Caco-2 (cell line): ENCODE measurements at regions of chr4 and their contacts with region 1.

Region 1: DNA sequence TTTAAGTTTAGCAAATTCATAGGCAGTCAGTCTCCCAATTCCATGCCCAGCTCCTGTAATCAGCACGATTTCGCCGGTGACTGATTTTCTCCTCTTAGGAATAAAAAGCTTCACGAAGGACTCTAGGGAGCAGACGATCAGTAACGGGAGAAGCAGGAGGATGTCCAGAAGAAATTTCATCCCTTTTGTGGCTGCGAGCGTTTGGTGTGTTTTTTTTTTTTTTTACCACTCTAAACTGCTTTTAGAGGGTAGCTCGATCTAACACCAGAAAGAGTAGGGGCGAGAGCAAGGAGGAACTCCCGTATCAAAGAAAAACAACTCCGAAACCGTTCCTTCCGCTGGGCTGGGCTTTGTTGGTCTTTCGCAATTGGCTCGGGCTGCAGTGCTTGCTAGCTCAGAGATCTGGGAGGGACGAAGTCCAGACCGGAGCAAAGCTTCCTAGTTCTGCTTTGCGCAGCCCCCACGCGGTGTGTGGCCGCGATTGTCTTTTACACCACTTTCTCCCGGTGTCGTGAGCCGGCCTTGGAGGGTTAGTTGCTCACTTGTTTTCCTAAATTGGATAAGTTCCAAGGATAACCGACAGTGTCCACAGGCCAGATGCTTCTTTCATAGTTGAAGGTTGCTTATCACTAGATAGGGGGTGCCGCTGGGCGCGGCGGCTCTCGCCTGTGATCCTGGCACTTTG is at the start of gene HSD17B11:
- DNase-seq: peak; percentile 85 to 90
- H3K4me3 ChIP-seq: peak within 1 kb of the TSS; percentile 53
- H3K4me3 Mint-ChIP-seq: peak within 1 kb of the TSS; percentile 87
- H3K27ac Mint-ChIP-seq: peak within 1 kb of the TSS; percentile 92
- H3K4me1 ChIP-seq: peaks cover 11% of the 10 kb centered on the region; the same call in 1 of the 2 replicates
- H3K4me1 Mint-ChIP-seq: peaks cover 18% of the 10 kb centered on the region
- H3K27me3 ChIP-seq: no peaks in the 10 kb centered on the region
- H3K27me3 Mint-ChIP-seq: no peaks in the 10 kb centered on the region
- CTCF ChIP-seq: no peak
- total RNA-seq, gene HSD17B11: 39.3 and 42.8 TPM in 2 replicates

Region 2: GRCh38 chr4:87422104-87423052 is 31.3 kb after region 1 on chr4 and contains the start of gene NUDT9:
- CTCF ChIA-PET with region 1: interaction called, 3 read pairs
- POLR2A ChIA-PET with region 1: interaction called, 12 read pairs
- intact Hi-C with region 1: loop called (anchors 1 kb)
- DNase-seq: peak; percentile 93 to 95
- H3K4me3 ChIP-seq: peak within 1 kb of the TSS; percentile 79
- H3K4me3 Mint-ChIP-seq: peak within 1 kb of the TSS; percentile 94
- H3K27ac Mint-ChIP-seq: peak within 1 kb of the TSS; percentile 96
- H3K4me1 ChIP-seq: peaks cover 17% of the 10 kb centered on the region
- H3K4me1 Mint-ChIP-seq: peaks cover 13% of the 10 kb centered on the region
- H3K27me3 ChIP-seq: no peaks in the 10 kb centered on the region
- H3K27me3 Mint-ChIP-seq: no peaks in the 10 kb centered on the region
- CTCF ChIP-seq: no peak
- total RNA-seq, gene NUDT9: 27.9 and 28.7 TPM in 2 replicates

Region 3: DNA sequence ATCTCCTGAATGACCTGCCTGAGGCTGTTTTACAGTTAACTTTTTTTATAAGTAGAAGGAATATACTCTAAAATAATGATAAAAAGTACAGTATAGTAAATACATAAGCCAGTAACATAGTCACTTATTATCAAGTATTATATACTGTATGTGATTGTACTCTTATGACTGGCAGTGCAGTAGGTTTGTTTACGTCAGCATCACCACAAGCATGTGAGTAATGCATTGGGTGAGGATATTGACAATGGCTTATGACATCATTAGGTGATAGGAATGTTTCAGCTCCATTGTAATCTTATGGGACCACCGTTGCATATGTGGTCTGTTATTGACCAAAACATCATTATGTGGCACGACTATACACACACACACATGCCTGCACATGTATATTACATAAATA is 51.9 kb after region 1 on chr4:
- CTCF ChIA-PET with region 1: no interaction called
- POLR2A ChIA-PET with region 1: no interaction called
- intact Hi-C with region 1: no loop called
- DNase-seq: no peak
- H3K4me3 ChIP-seq: no peak overlapping the region
- H3K4me3 Mint-ChIP-seq: no peak overlapping the region
- H3K27ac Mint-ChIP-seq: no peak overlapping the region
- H3K4me1 ChIP-seq: no peaks in the 10 kb centered on the region
- H3K4me1 Mint-ChIP-seq: peaks cover 14% of the 10 kb centered on the region
- H3K27me3 ChIP-seq: no peaks in the 10 kb centered on the region
- H3K27me3 Mint-ChIP-seq: no peaks in the 10 kb centered on the region
- CTCF ChIP-seq: no peak